Activated T-helper 2 cell treated with anti-CD3 and anti-CD28 coated beads, Interferon-gamma antibody, Interleukin-2, Interleukin-4, amounts not matched to agents 10 μg/mL and 5 μg/mL and 100 μg/mL, durations not matched to agents 14 hours and 24 hours and 36 hours (primary cell): ENCODE measurements at regions of chr5 and their contacts with region 1.

Region 1: DNA sequence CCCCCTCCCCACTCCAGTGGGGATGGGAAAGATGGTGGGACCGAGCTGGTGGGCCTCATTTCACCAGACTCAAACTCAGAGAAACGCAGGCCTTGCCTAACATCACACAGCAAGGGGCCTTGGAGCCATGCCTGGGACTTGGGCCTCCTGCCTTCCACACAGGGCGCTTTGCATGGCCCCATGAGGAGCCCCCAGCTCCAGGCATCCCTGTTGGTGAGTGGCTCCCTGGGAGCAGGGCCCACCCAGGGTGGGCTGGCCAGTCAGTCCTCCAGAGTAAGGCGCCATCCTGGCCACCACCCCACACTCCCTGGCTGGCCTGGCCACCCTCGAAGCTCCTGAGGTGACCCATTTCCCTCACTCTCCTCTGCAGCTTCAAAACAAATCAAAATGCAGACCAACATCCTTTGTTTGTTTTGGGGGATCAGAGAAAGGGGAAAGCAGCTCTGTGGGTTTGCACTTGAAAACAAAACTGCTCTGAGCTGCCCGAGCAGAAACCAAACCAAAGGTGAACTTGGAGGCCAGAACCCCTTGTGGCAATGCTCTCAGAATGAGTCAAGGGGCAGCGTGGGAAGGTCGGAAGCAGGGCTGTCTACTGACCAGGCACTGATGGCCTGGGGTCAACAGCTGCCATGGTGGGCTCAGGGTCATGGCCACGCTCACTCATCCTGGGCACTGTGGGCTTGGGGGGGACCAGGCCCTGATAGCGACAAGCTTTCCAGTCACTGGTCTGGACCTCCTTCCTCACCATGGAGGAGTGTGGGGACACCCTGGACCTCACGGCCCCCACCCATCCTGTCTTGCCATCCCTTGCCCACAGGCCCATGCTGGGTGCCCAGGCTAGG is 37.0 kb upstream of the VDAC1 start:
- DNase-seq: no peak
- H3K4me3 Mint-ChIP-seq: no peak overlapping the region
- H3K27ac Mint-ChIP-seq: no peak overlapping the region
- H3K4me1 Mint-ChIP-seq: no peaks in the 10 kb centered on the region
- H3K27me3 Mint-ChIP-seq: peaks cover 9% of the 10 kb centered on the region

Region 2: DNA sequence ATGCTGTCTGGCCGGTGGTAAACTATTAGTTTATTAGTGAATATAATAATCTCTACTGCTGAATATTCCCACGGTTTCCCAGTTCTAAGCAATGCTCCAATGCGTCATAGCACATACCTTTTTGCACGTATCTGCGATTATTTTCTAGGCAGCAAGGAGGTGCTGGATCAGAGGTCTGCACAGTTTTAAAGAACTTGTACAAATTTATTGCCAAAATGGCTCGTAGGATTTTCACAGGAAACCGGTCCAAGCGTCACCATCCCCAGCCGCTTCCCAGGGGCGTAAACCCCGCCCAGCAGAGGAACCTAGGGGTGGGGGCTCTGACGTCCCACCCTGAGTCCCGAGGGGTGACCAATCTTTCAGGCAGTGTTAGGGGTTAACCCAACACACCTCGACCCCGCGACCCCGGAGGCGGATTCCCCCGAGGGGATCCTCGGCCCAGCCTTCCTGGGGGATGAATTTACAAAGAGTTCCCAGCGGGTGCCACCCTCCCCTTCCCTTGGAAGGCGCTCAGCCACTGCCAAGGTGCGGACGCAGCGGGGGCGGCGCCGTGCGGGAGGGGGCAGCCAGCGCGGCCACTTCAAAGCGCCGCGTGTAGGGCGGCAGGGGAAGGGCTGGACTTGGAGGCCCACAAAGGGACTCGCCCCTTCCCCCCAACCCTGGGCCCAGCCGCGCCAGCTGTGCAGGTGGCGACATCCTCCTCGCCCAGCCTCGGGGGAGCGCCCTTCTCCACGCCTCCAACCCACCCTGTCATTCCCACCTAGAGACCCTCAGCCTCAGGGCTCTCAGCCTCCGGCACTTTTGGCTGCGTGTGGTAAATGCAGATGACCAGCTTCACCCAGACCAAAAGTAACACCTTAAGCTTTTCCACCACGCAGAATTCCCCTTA is 29.2 kb after region 1 on chr5:
- intact Hi-C with region 1: loop called (anchors 2 kb)
- DNase-seq: no peak
- H3K4me3 Mint-ChIP-seq: peak overlapping the region; percentile 27
- H3K27ac Mint-ChIP-seq: peak overlapping the region; percentile 48
- H3K4me1 Mint-ChIP-seq: peaks cover 34% of the 10 kb centered on the region
- H3K27me3 Mint-ChIP-seq: peaks cover 59% of the 10 kb centered on the region

Region 3: GRCh38 chr5:134101686-134102439 is 60.1 kb after region 1 on chr5:
- intact Hi-C with region 1: loop called (anchors 2 kb)
- DNase-seq: peak; percentile 57
- H3K4me3 Mint-ChIP-seq: no peak overlapping the region
- H3K27ac Mint-ChIP-seq: no peak overlapping the region
- H3K4me1 Mint-ChIP-seq: peaks cover 49% of the 10 kb centered on the region
- H3K27me3 Mint-ChIP-seq: peaks cover 33% of the 10 kb centered on the region

Region 4: GRCh38 chr5:134127376-134127861 is 85.6 kb after region 1 on chr5:
- intact Hi-C with region 1: no loop called
- DNase-seq: no peak
- H3K4me3 Mint-ChIP-seq: no peak overlapping the region
- H3K27ac Mint-ChIP-seq: no peak overlapping the region
- H3K4me1 Mint-ChIP-seq: peaks cover 38% of the 10 kb centered on the region
- H3K27me3 Mint-ChIP-seq: peaks cover 5% of the 10 kb centered on the region

Region 5: DNA sequence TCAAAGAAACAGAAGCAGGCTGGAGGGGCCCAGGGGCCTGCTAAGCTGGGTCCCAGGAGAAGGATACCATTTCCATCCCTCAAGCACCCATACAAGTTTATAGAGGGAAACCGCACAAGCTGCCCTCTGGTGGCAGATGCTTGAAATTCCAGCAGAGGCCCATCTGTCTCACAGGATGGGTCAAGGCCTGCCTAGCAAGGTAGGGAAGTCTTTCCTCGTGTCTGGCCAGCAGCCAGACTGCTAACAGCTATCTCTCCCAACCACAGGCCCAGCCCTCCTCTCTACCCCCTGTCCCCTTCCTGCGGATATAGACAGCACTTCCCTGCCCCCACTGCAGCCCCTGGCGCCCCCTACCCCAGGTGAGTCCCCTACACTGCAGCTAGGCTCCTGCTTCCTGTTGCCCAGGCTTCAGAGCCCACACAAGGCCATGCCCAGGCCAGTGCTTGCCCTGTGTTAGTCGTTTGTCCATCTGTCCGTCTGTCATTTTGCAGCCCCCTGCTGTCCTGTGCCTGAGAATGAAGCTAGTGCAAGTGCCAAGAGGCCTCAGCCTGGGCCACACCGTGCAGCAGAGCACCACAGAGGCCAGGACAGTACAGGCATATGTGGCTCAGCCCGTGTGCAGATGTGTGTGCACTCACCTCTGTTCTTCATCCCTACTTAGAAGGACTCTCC is 98.9 kb after region 1 on chr5:
- intact Hi-C with region 1: loop called (anchors 1 kb)
- DNase-seq: peak; percentile 50
- H3K4me3 Mint-ChIP-seq: no peak overlapping the region
- H3K27ac Mint-ChIP-seq: no peak overlapping the region
- H3K4me1 Mint-ChIP-seq: peaks cover 44% of the 10 kb centered on the region
- H3K27me3 Mint-ChIP-seq: peaks cover 3% of the 10 kb centered on the region

Region 6: DNA sequence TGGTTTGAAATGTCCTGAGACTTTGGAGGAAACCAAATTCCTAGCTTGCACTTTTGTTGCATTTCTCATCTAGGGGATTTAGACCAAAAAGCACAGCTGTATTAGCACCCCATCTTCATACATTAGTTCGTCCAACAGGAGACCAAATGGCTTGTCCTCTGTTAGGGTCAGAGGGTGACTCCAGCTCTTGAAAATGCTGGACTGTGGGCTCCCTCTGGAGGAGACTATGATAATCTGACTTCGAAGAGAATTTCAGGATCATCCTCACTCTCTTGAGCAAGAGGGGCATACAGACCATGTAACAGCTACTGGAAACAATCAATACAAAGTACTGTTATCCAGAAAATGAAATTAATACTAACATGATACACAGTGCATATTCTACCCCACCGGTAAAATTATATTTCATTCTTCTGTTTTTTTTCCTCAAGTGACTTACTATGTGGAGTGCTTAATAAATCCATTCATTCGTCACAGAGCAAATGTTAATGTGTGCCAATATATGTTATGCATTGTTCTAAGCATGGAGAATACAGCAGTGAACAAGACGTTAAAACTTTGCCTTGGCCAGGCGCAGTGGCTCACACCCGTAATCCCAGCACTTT is 247.8 kb after region 1 on chr5:
- intact Hi-C with region 1: loop called (anchors 10 kb)
- DNase-seq: peak; percentile 12
- H3K4me3 Mint-ChIP-seq: no peak overlapping the region
- H3K27ac Mint-ChIP-seq: no peak overlapping the region
- H3K4me1 Mint-ChIP-seq: no peaks in the 10 kb centered on the region
- H3K27me3 Mint-ChIP-seq: peaks cover 21% of the 10 kb centered on the region